ENCODE measurements at regions of chr3 and their contacts with region 1.

Region 1: DNA sequence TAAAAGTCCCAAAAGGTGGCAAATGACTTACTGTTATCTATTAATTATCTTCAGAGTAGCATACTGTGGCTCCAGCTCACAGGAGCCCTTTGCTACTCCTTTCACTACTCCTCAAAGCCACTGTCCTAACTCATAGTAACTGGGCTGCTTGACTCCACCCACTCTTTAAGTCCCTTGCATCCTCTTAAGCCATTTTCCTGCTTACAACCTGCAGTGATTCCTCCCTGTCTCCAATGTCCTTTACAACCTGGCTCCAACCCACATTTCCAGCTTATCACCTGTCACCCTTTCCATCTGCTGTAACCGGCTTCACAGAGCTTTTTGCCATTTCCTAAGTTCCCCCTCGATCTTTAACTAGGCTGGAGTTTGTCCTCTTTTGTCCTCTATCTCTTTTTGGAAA is 388.1 kb downstream of the FGF12 start:
- DNase-seq: no peak
- ATAC-seq: no peak
- H3K4me3 ChIP-seq: no peak overlapping the region
- H3K27ac ChIP-seq: no peak overlapping the region
- H3K4me1 ChIP-seq: no peaks in the 10 kb centered on the region
- H3K27me3 ChIP-seq: no peaks in the 10 kb centered on the region
- CTCF ChIP-seq: no peak

Region 2: DNA sequence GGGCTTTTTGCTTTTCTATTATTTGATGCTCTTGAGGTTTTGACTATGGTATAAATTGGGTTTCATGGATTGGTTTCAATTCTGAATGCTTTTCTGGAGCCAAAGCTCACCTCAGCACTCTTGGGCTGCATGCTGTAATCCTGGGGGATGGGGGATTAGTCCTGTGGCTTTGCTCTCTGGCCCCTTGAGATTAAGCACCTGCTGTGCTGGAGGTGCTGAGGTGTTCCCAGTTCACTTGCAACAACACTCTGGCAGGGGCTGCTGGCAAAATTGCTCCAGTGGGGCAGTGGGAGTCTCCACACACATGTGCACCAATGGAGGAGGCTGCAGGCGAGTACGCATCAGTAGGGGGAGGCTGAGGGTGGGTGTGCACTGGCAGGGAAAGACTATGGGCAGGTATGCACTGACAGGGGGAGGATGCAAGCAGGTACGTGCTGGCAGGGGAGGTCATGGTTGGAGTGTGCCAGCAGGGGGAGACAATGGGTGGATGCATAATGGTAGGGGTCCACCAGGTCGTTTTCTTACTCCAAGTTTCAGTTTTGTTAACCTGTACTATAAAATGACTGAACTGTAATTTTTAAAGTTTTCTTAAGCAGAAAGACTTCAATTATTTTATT is 101.1 kb before region 1 on chr3:
- CTCF ChIA-PET with region 1: interaction called, 12 read pairs
- POLR2A ChIA-PET with region 1: no interaction called
- in situ Hi-C with region 1: no loop called
- intact Hi-C with region 1: no loop called
- DNase-seq: no peak
- ATAC-seq: no peak
- H3K4me3 ChIP-seq: no peak overlapping the region
- H3K27ac ChIP-seq: no peak overlapping the region
- H3K4me1 ChIP-seq: no peaks in the 10 kb centered on the region
- H3K27me3 ChIP-seq: no peaks in the 10 kb centered on the region
- CTCF ChIP-seq: no peak

Region 3: DNA sequence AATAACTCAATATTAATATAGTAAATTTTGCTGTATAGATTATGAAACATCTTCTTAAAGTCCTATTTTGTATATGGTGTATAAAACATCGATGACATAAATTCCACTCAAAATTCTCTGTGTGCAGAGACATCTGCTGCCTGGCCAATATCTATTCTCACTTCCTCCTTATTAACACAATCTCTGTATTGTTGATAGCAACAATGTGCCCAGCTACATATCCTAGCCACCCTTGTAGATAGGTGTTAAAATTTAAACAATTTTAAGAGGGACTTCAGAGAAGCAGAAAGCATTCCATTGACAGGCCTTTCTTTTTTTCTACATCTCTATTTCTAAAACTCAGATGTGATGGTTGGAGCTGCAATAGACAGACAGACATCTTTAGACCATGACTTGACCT is 315.8 kb after region 1 on chr3:
- CTCF ChIA-PET with region 1: no interaction called
- POLR2A ChIA-PET with region 1: no interaction called
- in situ Hi-C with region 1: no loop called
- intact Hi-C with region 1: no loop called
- DNase-seq: no peak
- ATAC-seq: no peak
- H3K4me3 ChIP-seq: no peak overlapping the region
- H3K27ac ChIP-seq: no peak overlapping the region
- H3K4me1 ChIP-seq: no peaks in the 10 kb centered on the region
- H3K27me3 ChIP-seq: no peaks in the 10 kb centered on the region
- CTCF ChIP-seq: no peak

Measured in Panc1 (cell line).